MCF 10A (cell line): ENCODE measurements at regions of chr11 and their contacts with region 1.

Region 1: DNA sequence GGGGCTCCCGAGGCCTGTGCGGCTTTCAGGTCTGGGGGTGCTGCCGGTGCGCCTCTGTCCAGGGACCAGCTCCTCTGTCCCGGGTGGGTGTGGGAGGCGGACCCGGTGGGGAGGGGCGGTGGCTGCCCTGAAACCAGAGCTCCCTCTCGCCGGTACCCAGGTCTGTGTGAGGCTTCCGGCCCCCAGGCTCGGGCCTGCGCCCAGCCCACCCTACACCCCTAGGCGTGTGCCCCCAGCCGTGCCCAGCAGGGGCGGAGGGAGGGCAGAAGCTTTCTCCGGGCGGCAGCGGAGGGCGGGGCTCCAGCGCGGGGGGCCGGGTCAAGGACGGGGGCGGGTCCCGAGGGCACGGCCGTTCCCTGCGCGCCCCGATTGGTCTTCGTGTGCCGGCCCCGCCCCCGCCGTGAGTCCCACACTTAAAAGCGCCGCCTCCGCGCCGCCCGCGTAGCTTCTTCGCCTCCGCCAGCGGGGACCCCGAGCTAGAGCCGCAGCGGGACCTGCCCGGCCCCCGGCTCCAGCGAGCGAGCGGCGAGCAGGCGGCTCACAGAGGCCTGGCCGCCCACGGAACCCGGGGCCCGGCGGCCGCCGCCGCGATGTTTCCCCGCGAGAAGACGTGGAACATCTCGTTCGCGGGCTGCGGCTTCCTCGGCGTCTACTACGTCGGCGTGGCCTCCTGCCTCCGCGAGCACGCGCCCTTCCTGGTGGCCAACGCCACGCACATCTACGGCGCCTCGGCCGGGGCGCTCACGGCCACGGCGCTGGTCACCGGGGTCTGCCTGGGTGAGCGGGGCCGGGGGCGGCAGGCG is 616 bp downstream of the PNPLA2 start:
- DNase-seq: peak; percentile 89
- H3K4me3 Mint-ChIP-seq: peak overlapping the region; percentile 72
- H3K27ac Mint-ChIP-seq: peak overlapping the region; percentile 40
- H3K4me1 Mint-ChIP-seq: peaks cover 11% of the 10 kb centered on the region
- H3K27me3 Mint-ChIP-seq: no peaks in the 10 kb centered on the region
- CTCF ChIP-seq: no peak

Region 2: GRCh38 chr11:747158-748006 is 71.9 kb before region 1 on chr11 and contains the start of gene TALDO1:
- CTCF ChIA-PET with region 1: no interaction called
- POLR2A ChIA-PET with region 1: interaction called, 15 read pairs
- intact Hi-C with region 1: no loop called
- DNase-seq: peak; percentile 88
- H3K4me3 Mint-ChIP-seq: peak within 1 kb of the TSS; percentile 82
- H3K27ac Mint-ChIP-seq: peak within 1 kb of the TSS; percentile 63
- H3K4me1 Mint-ChIP-seq: peaks cover 4% of the 10 kb centered on the region
- H3K27me3 Mint-ChIP-seq: no peaks in the 10 kb centered on the region
- CTCF ChIP-seq: peak; percentile 15
- total RNA-seq, gene TALDO1: 93.8 and 137 TPM in 2 replicates

Region 3: GRCh38 chr11:777288-778255 is 41.8 kb before region 1 on chr11 and contains the start of gene GATD1:
- CTCF ChIA-PET with region 1: no interaction called
- POLR2A ChIA-PET with region 1: interaction called, 16 read pairs
- intact Hi-C with region 1: no loop called
- DNase-seq: peak; percentile 84
- H3K4me3 Mint-ChIP-seq: peak within 1 kb of the TSS; percentile 85
- H3K27ac Mint-ChIP-seq: peak within 1 kb of the TSS; percentile 81
- H3K4me1 Mint-ChIP-seq: peaks cover 11% of the 10 kb centered on the region
- H3K27me3 Mint-ChIP-seq: no peaks in the 10 kb centered on the region
- CTCF ChIP-seq: no peak
- total RNA-seq, gene GATD1: 54.6 and 67.7 TPM in 2 replicates

Region 4: DNA sequence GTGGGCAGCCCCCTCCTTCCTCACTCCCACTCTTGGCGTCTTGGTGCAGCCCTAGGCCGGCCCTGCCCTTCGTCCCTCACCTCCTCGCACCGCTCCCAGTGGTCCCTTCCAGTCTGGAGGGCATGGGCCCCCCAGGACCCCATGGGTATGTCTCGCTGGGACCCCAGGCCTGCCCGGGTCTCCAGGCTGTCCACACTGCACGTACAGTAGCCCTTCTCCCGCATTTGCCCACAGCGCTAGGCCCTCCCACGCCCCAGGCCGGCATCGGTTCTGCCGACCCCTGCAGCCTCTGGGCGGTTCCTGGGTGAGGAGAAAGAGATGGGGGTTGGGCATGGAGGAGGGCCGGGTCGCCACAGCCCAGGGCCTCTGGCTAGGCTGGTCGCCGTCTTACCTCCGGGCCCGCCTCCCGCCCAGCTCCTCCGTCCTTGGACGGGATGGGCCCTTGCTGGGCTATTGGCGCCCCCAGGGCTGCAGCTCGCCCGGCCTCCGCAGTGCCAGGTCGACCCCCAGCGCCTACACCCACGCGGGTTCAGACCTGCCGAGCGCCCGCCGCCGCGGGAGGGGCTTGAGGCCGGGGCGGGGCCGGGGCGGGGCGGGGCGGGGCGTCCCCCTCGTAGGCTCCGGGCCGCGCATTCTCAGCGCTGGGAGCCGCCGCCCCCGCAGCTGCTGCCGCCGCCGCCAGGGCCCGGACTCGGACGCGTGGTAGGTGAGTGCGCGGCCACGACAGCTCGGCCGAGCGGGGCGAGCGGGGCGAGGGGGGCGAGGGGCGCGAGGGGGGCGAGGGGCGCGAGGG is 13.2 kb after region 1 on chr11 and contains the start of gene CD151:
- CTCF ChIA-PET with region 1: interaction called, 6 read pairs
- POLR2A ChIA-PET with region 1: interaction called, 274 read pairs
- intact Hi-C with region 1: loop called (anchors 1 kb)
- DNase-seq: peak; percentile 68
- H3K4me3 Mint-ChIP-seq: peak within 1 kb of the TSS; percentile 81
- H3K27ac Mint-ChIP-seq: peak within 1 kb of the TSS; percentile 94
- H3K4me1 Mint-ChIP-seq: peaks cover 17% of the 10 kb centered on the region
- H3K27me3 Mint-ChIP-seq: no peaks in the 10 kb centered on the region
- CTCF ChIP-seq: no peak
- total RNA-seq, gene CD151: 404 and 412 TPM in 2 replicates

Region 5: DNA sequence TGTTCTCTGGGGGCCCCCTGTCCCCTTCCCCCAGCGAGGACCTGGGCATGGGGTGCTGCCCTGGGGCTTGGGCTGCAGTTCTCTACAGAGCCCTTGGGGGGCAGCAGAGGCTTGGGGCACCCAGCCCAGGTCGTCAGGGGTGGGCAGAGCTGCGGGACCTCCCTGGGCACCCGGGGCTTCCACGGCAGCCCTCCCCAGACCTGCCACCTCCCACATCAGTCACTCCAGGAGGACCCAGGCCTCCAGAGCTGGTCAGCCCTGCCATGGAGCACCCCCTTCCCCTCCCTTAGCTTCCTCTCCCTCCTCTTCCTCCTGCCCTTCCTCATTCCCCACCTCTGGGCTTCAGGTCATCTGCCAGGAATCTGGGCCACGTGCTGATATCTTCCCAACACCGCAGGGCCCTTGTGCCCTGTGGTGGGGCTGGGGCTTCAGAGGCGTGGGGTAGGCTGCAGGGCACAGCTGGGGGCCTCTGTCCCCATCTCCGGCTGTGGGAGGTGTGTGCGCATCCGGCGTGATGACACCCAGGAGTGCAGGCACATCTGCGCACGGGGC is 29.1 kb after region 1 on chr11:
- CTCF ChIA-PET with region 1: no interaction called
- POLR2A ChIA-PET with region 1: interaction called, 141 read pairs
- intact Hi-C with region 1: no loop called
- DNase-seq: peak; percentile 40
- H3K4me3 Mint-ChIP-seq: no peak overlapping the region
- H3K27ac Mint-ChIP-seq: no peak overlapping the region
- H3K4me1 Mint-ChIP-seq: peaks cover 15% of the 10 kb centered on the region
- H3K27me3 Mint-ChIP-seq: no peaks in the 10 kb centered on the region
- CTCF ChIP-seq: peak; percentile 87

Region 6: DNA sequence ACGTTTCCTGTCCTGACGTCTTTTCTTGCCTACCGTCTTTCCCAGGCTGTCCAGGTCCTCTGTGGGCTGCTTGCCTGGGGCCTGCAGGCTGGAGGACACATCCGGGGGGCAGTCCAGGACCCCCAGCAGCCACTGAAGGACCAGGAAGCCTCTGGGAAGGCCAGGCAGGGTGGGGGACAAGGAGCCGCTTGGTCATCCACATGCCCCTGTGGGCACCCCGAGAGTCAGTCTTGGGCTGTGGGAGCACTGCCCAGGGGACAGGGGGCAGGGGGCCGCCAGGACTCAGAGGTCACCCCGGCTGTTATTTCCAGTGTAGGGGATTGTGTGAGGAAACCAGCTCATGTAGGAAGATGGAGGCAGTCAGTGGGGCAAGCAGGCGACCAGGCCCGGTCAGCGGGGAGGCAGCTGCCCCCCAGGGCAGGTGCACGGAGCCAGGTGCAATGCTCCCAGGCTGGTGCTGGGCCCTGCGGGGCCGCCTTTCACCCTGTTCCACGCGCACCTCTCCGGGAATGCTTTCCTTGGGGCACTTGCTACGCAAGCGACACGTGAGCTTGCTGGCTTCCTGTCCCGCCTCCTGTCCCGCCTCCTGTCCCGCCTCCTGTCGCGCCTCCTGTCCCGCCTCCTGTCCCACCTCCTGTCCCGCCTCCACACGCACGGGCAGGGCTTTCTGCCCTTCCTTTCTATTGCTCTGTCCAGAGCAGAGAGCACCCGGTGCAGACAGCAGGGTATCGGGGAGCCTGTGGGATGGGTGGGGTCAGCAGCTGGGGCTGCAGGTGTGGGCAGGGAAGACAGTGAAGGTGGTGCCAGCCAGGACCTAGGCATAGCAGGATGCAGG is 443.1 kb after region 1 on chr11:
- CTCF ChIA-PET with region 1: no interaction called
- POLR2A ChIA-PET with region 1: no interaction called
- intact Hi-C with region 1: no loop called
- DNase-seq: peak; percentile 91
- H3K4me3 Mint-ChIP-seq: peak overlapping the region; percentile 73
- H3K27ac Mint-ChIP-seq: peak overlapping the region; percentile 42
- H3K4me1 Mint-ChIP-seq: peaks cover 10% of the 10 kb centered on the region
- H3K27me3 Mint-ChIP-seq: no peaks in the 10 kb centered on the region
- CTCF ChIP-seq: no peak